Panc1 (cell line): ENCODE measurements at regions of chr15 and their contacts with region 1.

Region 1: GRCh38 chr15:65980824-65981456 is 111.6 kb downstream of the RAB11A start:
- DNase-seq: peak; percentile 5
- ATAC-seq: peak; percentile 83
- H3K4me3 ChIP-seq: no peak overlapping the region
- H3K27ac ChIP-seq: no peak overlapping the region
- H3K4me1 ChIP-seq: no peaks in the 10 kb centered on the region; the same call in 1 of the 2 replicates
- H3K27me3 ChIP-seq: peaks cover 9% of the 10 kb centered on the region
- CTCF ChIP-seq: peak; percentile 84

Region 2: DNA sequence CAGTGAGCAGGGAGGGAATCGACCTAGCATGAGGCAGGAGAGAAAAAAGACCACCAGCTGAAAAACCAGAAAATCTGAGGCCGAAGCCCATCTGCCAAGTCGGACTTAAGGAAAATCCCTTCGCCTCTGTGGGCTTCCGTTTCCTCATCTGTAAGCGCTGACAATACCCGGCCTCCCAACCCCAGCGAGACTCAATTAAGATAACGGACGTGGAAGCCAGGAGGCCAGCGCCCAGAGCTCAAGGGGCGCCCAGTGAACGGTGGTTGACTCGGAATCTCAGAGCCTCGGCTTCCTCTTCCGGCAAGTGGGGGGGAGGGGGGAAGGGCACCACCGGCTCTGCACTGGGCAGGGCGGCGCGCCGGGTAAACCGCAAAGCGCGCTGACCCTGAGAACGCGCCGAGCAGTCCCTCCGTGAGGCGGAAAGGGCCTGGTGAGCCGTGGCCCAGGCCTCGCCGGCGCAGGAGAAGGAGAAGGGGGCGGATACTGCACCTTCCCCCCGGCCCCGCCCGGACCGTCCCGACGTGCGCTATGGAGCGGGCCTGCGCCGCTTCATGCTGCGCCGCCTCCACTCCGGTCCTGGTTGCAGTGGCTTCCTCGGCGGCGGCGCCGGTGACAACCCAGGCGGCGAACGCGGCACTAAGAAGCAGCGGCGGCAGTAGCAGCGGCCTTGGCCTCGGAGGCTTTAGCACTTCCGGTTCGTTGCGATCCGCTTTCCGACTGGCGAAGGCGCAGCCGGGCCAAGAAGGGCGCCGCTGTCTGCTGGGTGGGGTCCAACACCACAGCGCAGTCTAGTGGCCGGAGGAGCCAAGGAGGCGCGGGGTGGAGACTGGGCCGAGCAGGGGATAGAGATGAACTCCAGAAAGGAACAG is 463.7 kb before region 1 on chr15 and contains the start of gene DPP8:
- CTCF ChIA-PET with region 1: no interaction called
- POLR2A ChIA-PET with region 1: interaction called, 13 read pairs
- in situ Hi-C with region 1: no loop called
- intact Hi-C with region 1: no loop called
- DNase-seq: peak; percentile 85
- ATAC-seq: peak; percentile 98
- H3K4me3 ChIP-seq: peak within 1 kb of the TSS; percentile 98 to 99
- H3K27ac ChIP-seq: peak within 1 kb of the TSS; percentile 96
- H3K4me1 ChIP-seq: peaks cover 20% of the 10 kb centered on the region; the same call in 1 of the 2 replicates
- H3K27me3 ChIP-seq: no peaks in the 10 kb centered on the region
- CTCF ChIP-seq: peak; percentile 99
- total RNA-seq, gene DPP8: 36.2 TPM

Region 3: DNA sequence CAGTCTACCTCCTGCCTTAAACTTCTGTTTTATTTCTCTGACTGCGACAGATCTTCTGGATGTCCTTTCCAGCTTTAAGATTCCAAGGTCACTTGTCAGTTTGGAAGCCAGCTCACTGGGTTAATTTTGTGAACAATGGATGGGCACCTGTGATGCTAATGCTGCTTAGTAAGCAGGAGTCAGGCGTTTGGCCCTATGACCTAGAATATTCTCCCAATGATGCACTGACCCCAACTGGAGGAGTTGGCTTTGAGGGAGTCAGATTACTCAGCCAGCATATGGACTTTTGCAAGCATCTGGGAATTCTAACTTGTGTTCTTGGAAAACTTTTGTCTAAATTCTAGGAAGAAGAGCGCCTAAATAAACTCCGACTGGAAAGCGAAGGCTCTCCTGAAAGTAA is 422.6 kb before region 1 on chr15:
- CTCF ChIA-PET with region 1: interaction called, 10 read pairs
- POLR2A ChIA-PET with region 1: no interaction called
- in situ Hi-C with region 1: no loop called
- intact Hi-C with region 1: no loop called
- DNase-seq: no peak
- ATAC-seq: no peak
- H3K4me3 ChIP-seq: no peak overlapping the region
- H3K27ac ChIP-seq: no peak overlapping the region
- H3K4me1 ChIP-seq: no peaks in the 10 kb centered on the region; the same call in 1 of the 2 replicates
- H3K27me3 ChIP-seq: no peaks in the 10 kb centered on the region
- CTCF ChIP-seq: no peak

Region 4: DNA sequence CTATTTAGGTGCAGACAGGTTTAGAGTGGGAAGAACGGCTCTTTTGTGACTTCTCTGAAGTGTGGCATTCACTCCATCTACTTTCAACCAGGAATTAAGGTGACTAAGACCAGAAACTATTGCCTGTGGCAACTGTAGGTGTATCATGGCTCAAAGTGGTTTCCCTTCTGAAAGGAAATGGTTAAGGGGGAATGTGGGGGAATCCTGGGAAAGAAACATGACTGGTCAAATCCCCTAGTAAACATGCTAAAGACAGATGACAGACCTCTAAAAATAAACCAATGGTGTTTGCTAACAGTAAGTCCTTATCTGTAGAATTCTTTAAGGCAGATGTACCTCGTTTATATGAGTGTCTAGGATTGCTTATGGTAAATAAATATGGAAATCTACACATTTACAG is 215.7 kb after region 1 on chr15:
- CTCF ChIA-PET with region 1: no interaction called
- POLR2A ChIA-PET with region 1: no interaction called
- in situ Hi-C with region 1: no loop called
- intact Hi-C with region 1: loop called (anchors 10 kb)
- DNase-seq: no peak
- ATAC-seq: no peak
- H3K4me3 ChIP-seq: no peak overlapping the region
- H3K27ac ChIP-seq: no peak overlapping the region
- H3K4me1 ChIP-seq: no peaks in the 10 kb centered on the region
- H3K27me3 ChIP-seq: no peaks in the 10 kb centered on the region
- CTCF ChIP-seq: no peak